ENCODE measurements at regions of chr19 and their contacts with region 1.

Region 1: GRCh38 chr19:4624733-4625362 is 14.5 kb upstream of the TNFAIP8L1 start:
- DNase-seq: no peak
- H3K4me3 ChIP-seq: no peak overlapping the region
- H3K27ac ChIP-seq: no peak overlapping the region
- H3K4me1 ChIP-seq: no peaks in the 10 kb centered on the region
- H3K27me3 ChIP-seq: peaks cover 36% of the 10 kb centered on the region
- CTCF ChIP-seq: no peak
- EP300 ChIP-seq: no peak
- POLR2A ChIP-seq: no peak

Region 2: DNA sequence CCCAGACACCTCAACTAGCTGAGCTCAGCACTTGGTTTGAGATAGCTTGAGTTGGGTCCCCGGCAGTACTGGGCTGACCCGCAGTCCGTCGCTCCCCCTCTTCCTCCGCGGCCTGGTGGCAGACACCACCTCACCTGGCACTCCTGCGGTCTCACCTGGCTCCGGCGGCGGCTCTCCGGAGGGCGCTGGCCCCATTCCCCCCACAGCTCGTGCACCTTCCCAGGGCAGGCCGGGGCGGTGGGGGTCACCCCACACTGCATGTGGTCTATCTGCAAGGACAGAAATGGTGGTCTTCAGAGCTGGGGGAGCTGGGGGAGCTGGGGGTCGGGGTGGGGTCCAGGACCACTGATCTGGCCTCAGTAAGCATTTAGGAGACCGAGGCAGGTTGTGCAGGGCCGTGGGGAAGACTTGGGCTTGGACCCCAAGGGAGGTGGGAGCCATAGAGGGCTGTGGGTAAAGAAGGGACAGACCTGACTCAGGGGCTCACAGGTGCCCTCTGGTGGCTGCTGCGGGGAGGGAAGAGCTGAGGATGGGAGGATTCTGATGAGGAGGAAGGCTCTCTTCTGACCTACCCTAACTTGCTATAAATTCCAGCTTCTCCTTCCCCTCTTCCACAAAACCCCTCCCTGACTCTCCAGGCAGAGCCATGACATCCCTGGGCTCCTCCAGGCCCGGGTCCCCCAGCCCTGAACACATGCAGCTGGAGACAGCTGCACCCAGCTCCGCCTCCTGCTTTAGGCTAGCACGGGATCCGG is 99.9 kb before region 1 on chr19:
- in situ Hi-C with region 1: no loop called
- intact Hi-C with region 1: no loop called
- DNase-seq: peak; percentile 66
- H3K4me3 ChIP-seq: no peak overlapping the region
- H3K27ac ChIP-seq: no peak overlapping the region
- H3K4me1 ChIP-seq: no peaks in the 10 kb centered on the region
- H3K27me3 ChIP-seq: no peaks in the 10 kb centered on the region
- CTCF ChIP-seq: peak; percentile 43 to 73 (median 57)
- EP300 ChIP-seq: no peak
- POLR2A ChIP-seq: no peak

Region 3: DNA sequence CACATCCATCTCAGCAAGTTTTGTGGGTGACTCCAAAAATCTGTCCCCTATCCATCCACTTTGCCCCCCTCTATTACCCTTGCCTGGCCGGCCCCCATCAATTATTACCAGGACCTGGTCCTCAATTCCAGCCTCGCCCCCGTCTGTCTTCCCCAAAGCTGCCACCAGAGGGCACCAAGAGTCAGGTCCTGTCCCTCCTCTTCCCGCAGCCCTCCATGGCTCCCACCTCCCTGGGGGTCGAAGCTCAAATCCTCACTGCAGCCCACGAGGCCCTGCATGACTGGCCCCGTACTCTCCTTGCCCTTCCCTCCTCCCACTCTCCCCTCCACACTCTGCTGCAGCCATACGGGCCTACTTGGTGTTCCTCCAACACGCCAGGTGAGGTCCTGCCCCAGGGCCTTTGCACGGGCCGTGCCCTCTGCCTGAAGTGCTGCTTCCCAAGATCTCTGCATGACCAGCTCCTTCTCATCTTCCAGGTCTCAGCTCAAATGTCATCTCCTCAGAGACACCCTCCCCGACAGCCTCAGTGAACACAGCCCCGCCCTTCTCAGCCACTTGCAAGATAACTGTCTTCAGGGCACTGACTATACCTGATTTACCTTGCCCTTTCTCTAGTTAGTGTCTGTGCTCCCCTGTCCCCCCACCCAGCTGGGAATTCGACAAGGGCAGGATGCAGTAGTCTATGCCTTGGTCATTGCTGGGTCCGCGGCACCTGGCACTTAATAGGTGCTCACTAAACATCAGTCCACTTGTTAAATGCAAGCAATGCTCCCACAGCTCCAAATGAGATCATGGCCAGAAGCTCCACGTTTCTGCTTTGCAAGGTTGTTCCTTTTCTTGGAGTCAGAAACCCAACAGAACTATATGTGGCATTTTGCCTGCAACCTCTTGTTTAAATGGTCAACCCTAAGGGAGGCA is 48.6 kb before region 1 on chr19:
- in situ Hi-C with region 1: loop called in 3 of 4 experiments (anchors 10 kb)
- intact Hi-C with region 1: no loop called
- DNase-seq: peak; percentile 68
- H3K4me3 ChIP-seq: no peak overlapping the region
- H3K27ac ChIP-seq: peak overlapping the region in 2 of 4 donors; percentile 6 to 26
- H3K4me1 ChIP-seq: peaks cover 0 to 8% (median 5%) of the 10 kb centered on the region in 4 donors
- H3K27me3 ChIP-seq: peaks cover 86% of the 10 kb centered on the region
- CTCF ChIP-seq: peak; percentile 65 to 74 (median 70)
- EP300 ChIP-seq: no peak
- POLR2A ChIP-seq: no peak

Region 4: DNA sequence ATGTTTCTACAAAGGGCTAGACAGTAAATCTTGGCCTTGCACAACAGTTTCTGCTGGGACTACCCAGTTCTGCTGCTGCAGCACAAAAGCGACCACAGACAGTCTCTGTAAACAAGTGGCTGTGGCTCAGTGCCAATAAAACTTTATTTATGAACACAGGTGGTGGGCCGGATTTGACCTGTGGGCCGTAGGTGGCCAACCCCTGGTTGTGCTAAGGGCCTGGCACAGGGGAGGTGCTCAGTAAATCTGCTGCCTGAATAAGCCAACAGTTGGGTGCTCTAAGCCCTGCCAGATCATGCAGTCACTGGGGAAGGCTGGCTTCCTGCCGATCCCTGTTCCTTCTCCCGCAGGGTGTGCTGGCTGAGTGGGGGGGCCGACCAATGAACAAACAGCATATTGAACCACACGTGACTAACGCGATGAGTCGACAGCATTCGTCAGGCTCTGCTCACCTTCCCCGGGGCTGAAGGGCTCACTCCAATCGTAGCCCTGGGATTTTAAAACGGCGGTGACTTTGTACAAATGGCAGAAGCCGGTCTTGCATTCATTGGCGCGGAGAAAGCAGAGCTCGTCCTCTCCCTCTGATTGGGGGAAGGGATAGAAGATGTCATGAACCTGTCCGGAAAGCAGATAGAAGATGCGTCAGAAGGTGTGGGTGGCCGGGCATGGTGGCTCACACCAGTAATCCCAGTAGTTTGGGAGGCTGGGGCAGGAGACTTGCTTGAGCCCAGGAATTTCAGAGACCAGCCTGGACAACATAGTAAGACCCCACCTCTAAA is 69.5 kb after region 1 on chr19:
- in situ Hi-C with region 1: no loop called
- intact Hi-C with region 1: no loop called
- DNase-seq: peak; percentile 46
- H3K4me3 ChIP-seq: no peak overlapping the region
- H3K27ac ChIP-seq: peak overlapping the region; percentile 27 to 60 (median 36)
- H3K4me1 ChIP-seq: no peaks in the 10 kb centered on the region
- H3K27me3 ChIP-seq: no peaks in the 10 kb centered on the region
- CTCF ChIP-seq: no peak
- EP300 ChIP-seq: no peak
- POLR2A ChIP-seq: no peak

Measured in transverse colon (tissue), 4 donors.